Activated B cell treated with CpG ODN at 0.5 μM for 24 hours (primary cell): ENCODE measurements at regions of chr6 and their contacts with region 1.

Region 1: DNA sequence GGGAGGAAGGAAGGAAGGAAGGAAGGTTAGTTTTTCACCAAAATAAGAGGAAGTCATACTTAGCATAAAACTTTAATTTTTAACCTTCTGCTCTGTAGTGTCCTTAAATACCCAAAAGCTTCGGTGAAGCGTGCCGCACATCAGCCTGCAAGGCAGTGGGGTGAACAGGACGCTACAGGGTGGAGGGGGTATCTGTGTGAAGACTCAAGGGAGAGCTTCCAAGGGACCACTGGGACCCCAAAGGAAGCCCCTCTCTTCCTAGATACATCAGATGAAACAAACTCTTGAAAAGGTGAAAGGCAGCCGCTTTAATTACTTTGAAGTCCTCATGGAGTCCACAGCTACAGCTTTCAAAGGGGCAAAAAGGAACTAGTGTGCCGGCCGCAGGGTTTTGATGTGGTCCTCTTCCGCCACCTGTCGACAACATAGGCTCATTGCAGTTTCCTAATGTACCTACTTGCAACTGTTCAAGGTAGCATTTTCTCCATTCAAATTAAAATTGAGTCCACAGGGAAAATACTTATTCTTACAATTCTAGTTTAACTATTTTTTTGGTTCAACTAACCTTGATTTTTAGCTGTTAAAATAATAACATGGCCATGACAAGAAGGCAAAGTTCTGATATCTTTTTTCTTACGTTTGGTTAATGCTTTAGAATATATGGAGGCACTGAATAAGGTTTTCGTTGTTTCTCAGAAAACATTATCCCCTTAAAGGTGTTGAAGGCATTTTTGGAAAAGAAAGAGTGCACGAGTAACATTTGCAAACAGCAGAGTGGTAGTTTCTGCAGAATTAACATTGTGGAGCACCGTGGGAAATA is 135.0 kb upstream of the RIPOR2 start:
- DNase-seq: peak; percentile 63
- ATAC-seq: peak; percentile 94
- H3K4me3 Mint-ChIP-seq: peak overlapping the region; percentile 84
- H3K27ac Mint-ChIP-seq: peak overlapping the region; percentile 97
- H3K4me1 Mint-ChIP-seq: peaks cover 6% of the 10 kb centered on the region
- H3K27me3 Mint-ChIP-seq: no peaks in the 10 kb centered on the region
- CTCF ChIP-seq: peak; percentile 57

Region 2: DNA sequence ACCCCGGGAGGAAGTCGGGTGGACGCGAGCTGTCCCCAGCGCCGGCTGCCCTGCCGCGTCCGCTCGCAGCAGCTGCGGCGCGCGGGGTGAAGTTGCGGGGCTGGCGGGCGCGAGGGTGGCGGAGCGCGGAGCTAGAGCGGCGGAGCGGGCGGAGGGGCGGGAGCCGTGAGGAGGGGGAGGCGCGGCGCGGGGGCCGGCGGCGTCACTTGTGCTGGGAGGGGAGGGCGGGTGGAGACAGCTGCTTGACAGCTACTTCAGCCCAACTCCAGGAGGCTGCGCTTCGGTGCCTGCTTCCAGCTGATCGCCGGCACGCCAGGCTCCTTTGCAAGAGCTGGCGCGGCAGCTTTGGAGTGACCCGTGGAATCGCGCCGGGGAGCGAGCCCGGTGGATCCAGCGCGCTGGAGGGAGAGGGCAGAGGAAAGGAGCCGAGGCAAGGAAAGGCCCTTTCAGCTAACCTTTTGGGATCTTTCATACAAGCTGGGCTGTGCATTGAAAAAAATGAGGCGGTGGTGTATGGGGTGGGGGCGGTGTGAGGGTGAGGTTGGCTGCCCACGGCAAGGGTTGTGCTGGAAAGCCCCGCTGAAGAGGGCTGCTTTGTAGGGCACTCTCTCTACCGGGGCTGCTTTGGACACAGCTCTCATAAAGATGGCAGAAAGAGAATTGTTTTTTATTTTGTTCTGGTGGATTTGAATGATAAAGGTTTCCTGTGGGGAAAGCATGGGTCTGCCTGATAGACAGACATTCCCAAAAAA is 159.6 kb before region 1 on chr6:
- CTCF ChIA-PET with region 1: interaction called, 16 read pairs
- POLR2A ChIA-PET with region 1: interaction called, 5 read pairs
- intact Hi-C with region 1: loop called (anchors 1 kb)
- DNase-seq: no peak
- ATAC-seq: peak; percentile 49
- H3K4me3 Mint-ChIP-seq: peak overlapping the region; percentile 91
- H3K27ac Mint-ChIP-seq: peak overlapping the region; percentile 95
- H3K4me1 Mint-ChIP-seq: peaks cover 98% of the 10 kb centered on the region
- H3K27me3 Mint-ChIP-seq: no peaks in the 10 kb centered on the region
- CTCF ChIP-seq: no peak

Region 3: GRCh38 chr6:25017932-25018567 is 52.7 kb before region 1 on chr6:
- CTCF ChIA-PET with region 1: interaction called, 140 read pairs
- POLR2A ChIA-PET with region 1: interaction called, 5 read pairs
- intact Hi-C with region 1: loop called (anchors 2 kb)
- DNase-seq: no peak
- ATAC-seq: peak; percentile 68
- H3K4me3 Mint-ChIP-seq: peak overlapping the region; percentile 32
- H3K27ac Mint-ChIP-seq: peak overlapping the region; percentile 70
- H3K4me1 Mint-ChIP-seq: peaks cover 56% of the 10 kb centered on the region
- H3K27me3 Mint-ChIP-seq: no peaks in the 10 kb centered on the region
- CTCF ChIP-seq: no peak

Region 4: DNA sequence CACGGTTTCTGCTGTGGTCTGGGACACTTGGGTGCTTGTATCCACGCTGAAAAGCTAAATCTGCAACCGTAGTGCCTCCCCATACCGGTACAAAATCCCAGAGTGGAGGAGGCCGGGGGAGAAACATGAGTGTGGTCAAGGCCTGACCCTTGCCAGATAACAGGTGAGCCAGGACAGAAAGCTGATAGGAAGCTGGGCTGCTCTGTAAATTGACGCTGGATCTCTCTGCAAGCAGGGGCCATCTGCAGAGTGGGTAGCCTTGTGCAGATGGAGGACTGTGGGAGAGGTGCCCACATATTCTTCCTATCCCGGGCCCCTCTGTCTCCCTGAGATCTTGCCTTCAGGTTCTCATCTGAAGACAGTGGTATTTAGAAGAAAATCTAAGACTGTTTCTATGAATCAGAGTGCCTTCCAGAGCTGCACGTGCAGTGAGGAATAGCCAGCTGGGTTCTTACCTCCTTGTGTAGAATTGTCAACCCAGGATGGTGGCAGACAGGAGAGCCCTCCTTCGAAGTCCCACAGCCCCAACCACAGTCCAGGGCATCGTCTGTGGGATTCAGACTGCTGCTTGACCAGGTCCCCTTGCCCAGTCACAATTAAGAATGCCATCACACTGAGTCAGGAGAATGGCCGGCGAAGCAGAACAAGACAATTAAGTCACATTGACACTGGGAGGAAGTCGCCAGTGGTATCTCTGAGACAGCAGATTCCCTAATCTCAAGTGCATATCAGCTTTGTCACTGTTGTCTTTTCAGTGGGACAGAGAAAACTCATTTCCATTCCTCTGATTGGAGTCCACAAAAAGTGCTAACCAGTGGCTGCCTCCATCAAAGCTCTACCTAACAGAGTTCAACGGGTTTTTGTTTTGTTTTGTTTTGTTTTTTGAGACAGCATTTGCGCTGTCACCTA is 35.0 kb before region 1 on chr6:
- CTCF ChIA-PET with region 1: interaction called, 36 read pairs
- POLR2A ChIA-PET with region 1: interaction called, 7 read pairs
- intact Hi-C with region 1: no loop called
- DNase-seq: no peak
- ATAC-seq: peak; percentile 45
- H3K4me3 Mint-ChIP-seq: peak overlapping the region; percentile 78
- H3K27ac Mint-ChIP-seq: peak overlapping the region; percentile 77
- H3K4me1 Mint-ChIP-seq: peaks cover 77% of the 10 kb centered on the region
- H3K27me3 Mint-ChIP-seq: no peaks in the 10 kb centered on the region
- CTCF ChIP-seq: no peak

Region 5: GRCh38 chr6:25053875-25054371 is 16.8 kb before region 1 on chr6:
- CTCF ChIA-PET with region 1: interaction called, 20 read pairs
- POLR2A ChIA-PET with region 1: interaction called, 22 read pairs
- intact Hi-C with region 1: loop called (anchors 1 kb)
- DNase-seq: no peak
- ATAC-seq: peak; percentile 76
- H3K4me3 Mint-ChIP-seq: peak overlapping the region; percentile 75
- H3K27ac Mint-ChIP-seq: peak overlapping the region; percentile 96
- H3K4me1 Mint-ChIP-seq: peaks cover 96% of the 10 kb centered on the region
- H3K27me3 Mint-ChIP-seq: no peaks in the 10 kb centered on the region
- CTCF ChIP-seq: no peak